ENCODE measurements at regions of chr12 and their contacts with region 1.

Region 1: DNA sequence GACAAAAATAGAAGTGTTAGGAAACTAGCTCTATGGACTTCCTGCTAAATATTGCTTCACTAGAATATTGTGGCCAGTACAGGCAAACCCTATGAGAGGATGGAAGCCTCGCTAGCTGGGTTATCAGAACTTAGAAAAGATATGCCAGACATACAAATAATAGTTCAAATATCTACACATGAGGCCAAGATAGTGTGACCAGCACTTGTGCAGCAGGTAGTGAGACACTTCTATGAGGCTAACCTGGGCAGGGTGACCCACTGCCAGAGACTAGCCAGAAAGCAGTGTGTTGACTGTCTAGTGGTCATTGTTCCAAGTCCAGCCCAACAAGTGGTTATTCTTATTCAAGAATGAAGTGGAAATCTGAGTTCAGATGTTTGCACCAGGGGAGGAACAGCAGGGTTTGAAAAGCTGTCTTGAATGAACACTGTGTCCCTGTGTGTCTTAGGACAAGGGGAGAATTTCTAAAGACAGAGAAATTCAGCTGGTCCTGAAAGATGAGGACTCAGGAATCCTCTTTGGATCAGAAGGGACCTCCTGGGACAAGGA is 16.3 kb downstream of the TSPAN8 start:
- DNase-seq: peak; percentile 6 to 27
- ATAC-seq: peak; percentile 87 to 91
- H3K4me3 ChIP-seq: peak overlapping the region in 1 of 4 donors; percentile 23
- H3K27ac ChIP-seq: peak overlapping the region; percentile 74 to 78 (median 75)
- H3K4me1 ChIP-seq: peaks cover 32 to 42% of the 10 kb centered on the region in 2 donors
- H3K27me3 ChIP-seq: no peaks in the 10 kb centered on the region
- CTCF ChIP-seq: no peak
- POLR2A ChIP-seq: peak; percentile 11 to 46

Region 2: GRCh38 chr12:71157601-71158233 is 16.3 kb after region 1 on chr12 and contains the start of gene TSPAN8:
- in situ Hi-C with region 1: no loop called
- intact Hi-C with region 1: loop called (anchors 2 kb)
- DNase-seq: peak; percentile 25 to 30
- ATAC-seq: peak; percentile 79 to 90
- H3K4me3 ChIP-seq: peak within 1 kb of the TSS; percentile 52 to 62 (median 56)
- H3K27ac ChIP-seq: peak within 1 kb of the TSS; percentile 67 to 81 (median 76)
- H3K4me1 ChIP-seq: peaks cover 11 to 21% of the 10 kb centered on the region in 2 donors
- H3K27me3 ChIP-seq: no peaks in the 10 kb centered on the region
- CTCF ChIP-seq: no peak
- POLR2A ChIP-seq: peak in 1 of 2 donors; percentile 71
- total RNA-seq, gene TSPAN8: 21.0 to 117 (median 58.6) TPM